IMR-90 (cell line): ENCODE measurements at regions of chr22 and their contacts with region 1.

Region 1: GRCh38 chr22:35430897-35431322 is 31.0 kb downstream of the MCM5 start:
- DNase-seq: peak; percentile 96
- ATAC-seq: peak; percentile 97
- H3K4me3 ChIP-seq: no peak overlapping the region
- H3K27ac ChIP-seq: peak overlapping the region; percentile 2; the same call in 1 of the 2 replicates
- H3K4me1 ChIP-seq: peaks cover 13% of the 10 kb centered on the region
- H3K27me3 ChIP-seq: no peaks in the 10 kb centered on the region
- CTCF ChIP-seq: peak; percentile 99
- POLR2A ChIP-seq: peak; percentile 74
- RAD21 ChIP-seq: peak; percentile 100

Region 2: GRCh38 chr22:35418731-35419130 is 12.2 kb before region 1 on chr22:
- CTCF ChIA-PET with region 1: interaction called, 10 read pairs
- POLR2A ChIA-PET with region 1: no interaction called
- dilution Hi-C with region 1: no loop called
- in situ Hi-C with region 1: no loop called
- intact Hi-C with region 1: no loop called
- DNase-seq: no peak
- ATAC-seq: no peak
- H3K4me3 ChIP-seq: no peak overlapping the region
- H3K27ac ChIP-seq: no peak overlapping the region
- H3K4me1 ChIP-seq: peaks cover 2% of the 10 kb centered on the region
- H3K27me3 ChIP-seq: no peaks in the 10 kb centered on the region
- CTCF ChIP-seq: no peak
- POLR2A ChIP-seq: no peak
- RAD21 ChIP-seq: no peak

Region 3: DNA sequence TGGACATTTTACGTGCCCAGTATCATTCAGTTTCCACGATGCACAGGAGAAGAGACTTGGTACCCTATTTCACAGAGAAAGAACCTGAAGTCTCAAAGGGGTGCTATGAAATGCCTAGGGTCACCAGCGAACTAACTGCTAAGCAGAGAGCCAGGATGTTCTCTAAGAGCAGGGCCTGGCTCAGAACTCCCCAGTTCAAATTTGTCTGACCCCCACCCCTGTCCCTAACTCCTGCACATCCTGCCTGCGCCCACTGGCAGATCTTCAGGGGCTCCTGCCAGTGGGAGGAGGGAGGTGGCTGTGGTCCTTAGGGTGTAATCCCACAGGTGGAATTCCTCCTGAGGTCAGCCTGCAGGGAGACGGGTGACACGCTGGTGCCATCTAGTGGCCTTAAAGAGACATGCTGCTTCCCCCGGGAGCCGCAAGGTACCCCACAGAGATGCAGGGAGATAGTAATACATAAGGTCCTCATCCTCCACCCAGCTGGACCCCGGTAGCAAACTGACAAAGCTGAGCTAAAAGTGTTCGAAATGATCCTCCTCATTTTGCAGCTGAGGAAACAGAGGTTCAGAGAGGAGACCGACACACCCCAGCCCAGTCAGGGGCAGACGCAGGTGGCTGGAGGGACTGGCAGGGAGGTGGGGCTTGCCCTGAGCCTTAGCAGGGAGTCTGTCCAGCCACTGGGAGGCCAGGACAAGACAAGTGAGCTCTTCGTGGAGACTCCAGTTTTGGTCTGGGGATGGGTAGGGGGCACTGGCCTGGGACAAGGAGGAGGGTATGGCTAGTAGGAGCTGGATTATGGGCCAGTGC is 152.2 kb after region 1 on chr22:
- CTCF ChIA-PET with region 1: interaction called, 16 read pairs
- POLR2A ChIA-PET with region 1: interaction called, 4 read pairs
- dilution Hi-C with region 1: no loop called
- in situ Hi-C with region 1: loop called (anchors 5 kb)
- intact Hi-C with region 1: loop called (anchors 1 kb)
- DNase-seq: peak; percentile 65
- ATAC-seq: peak; percentile 88
- H3K4me3 ChIP-seq: no peak overlapping the region
- H3K27ac ChIP-seq: no peak overlapping the region
- H3K4me1 ChIP-seq: peaks cover 4% of the 10 kb centered on the region
- H3K27me3 ChIP-seq: no peaks in the 10 kb centered on the region
- CTCF ChIP-seq: peak; percentile 91
- POLR2A ChIP-seq: no peak
- RAD21 ChIP-seq: peak; percentile 95

Region 4: GRCh38 chr22:35728639-35729308 is 297.9 kb after region 1 on chr22:
- CTCF ChIA-PET with region 1: no interaction called
- POLR2A ChIA-PET with region 1: no interaction called
- dilution Hi-C with region 1: no loop called
- in situ Hi-C with region 1: no loop called
- intact Hi-C with region 1: no loop called
- DNase-seq: no peak
- ATAC-seq: no peak
- H3K4me3 ChIP-seq: no peak overlapping the region
- H3K27ac ChIP-seq: no peak overlapping the region
- H3K4me1 ChIP-seq: no peaks in the 10 kb centered on the region
- H3K27me3 ChIP-seq: no peaks in the 10 kb centered on the region
- CTCF ChIP-seq: no peak
- POLR2A ChIP-seq: no peak
- RAD21 ChIP-seq: no peak

Region 5: GRCh38 chr22:35840302-35840739 is 409.4 kb after region 1 on chr22:
- CTCF ChIA-PET with region 1: no interaction called
- POLR2A ChIA-PET with region 1: no interaction called
- dilution Hi-C with region 1: no loop called
- in situ Hi-C with region 1: loop called (anchors 10 kb)
- intact Hi-C with region 1: loop called (anchors 5 kb)
- DNase-seq: peak; percentile 98
- ATAC-seq: peak; percentile 87
- H3K4me3 ChIP-seq: peak overlapping the region; percentile 77
- H3K27ac ChIP-seq: peak overlapping the region; percentile 86
- H3K4me1 ChIP-seq: peaks cover 6% of the 10 kb centered on the region
- H3K27me3 ChIP-seq: no peaks in the 10 kb centered on the region
- CTCF ChIP-seq: no peak
- POLR2A ChIP-seq: peak; percentile 48; the same call in 1 of the 2 replicates
- RAD21 ChIP-seq: no peak